GM12878 (cell line): ENCODE measurements at regions of chr1 and their contacts with region 1.

Region 1: GRCh38 chr1:21721295-21721985 is 52.3 kb upstream of the RAP1GAP start:
- DNase-seq: no peak
- ATAC-seq: no peak
- H3K4me3 ChIP-seq: no peak overlapping the region
- H3K27ac ChIP-seq: no peak overlapping the region
- H3K4me1 ChIP-seq: no peaks in the 10 kb centered on the region
- H3K27me3 ChIP-seq: no peaks in the 10 kb centered on the region
- CTCF ChIP-seq: no peak
- EP300 ChIP-seq: no peak
- POLR2A ChIP-seq: no peak
- RAD21 ChIP-seq: no peak

Region 2: GRCh38 chr1:21734526-21734925 is 13.1 kb after region 1 on chr1:
- CTCF ChIA-PET with region 1: interaction called, 3 read pairs
- POLR2A ChIA-PET with region 1: interaction called, 3 read pairs
- RAD21 ChIA-PET with region 1: no interaction called
- SMC1A ChIA-PET with region 1: interaction called, 18 read pairs
- in situ Hi-C with region 1: no loop called
- intact Hi-C with region 1: no loop called
- DNase-seq: no peak
- ATAC-seq: no peak
- H3K4me3 ChIP-seq: no peak overlapping the region
- H3K27ac ChIP-seq: no peak overlapping the region
- H3K4me1 ChIP-seq: no peaks in the 10 kb centered on the region
- H3K27me3 ChIP-seq: no peaks in the 10 kb centered on the region
- CTCF ChIP-seq: no peak
- EP300 ChIP-seq: no peak
- POLR2A ChIP-seq: no peak
- RAD21 ChIP-seq: no peak

Region 3: DNA sequence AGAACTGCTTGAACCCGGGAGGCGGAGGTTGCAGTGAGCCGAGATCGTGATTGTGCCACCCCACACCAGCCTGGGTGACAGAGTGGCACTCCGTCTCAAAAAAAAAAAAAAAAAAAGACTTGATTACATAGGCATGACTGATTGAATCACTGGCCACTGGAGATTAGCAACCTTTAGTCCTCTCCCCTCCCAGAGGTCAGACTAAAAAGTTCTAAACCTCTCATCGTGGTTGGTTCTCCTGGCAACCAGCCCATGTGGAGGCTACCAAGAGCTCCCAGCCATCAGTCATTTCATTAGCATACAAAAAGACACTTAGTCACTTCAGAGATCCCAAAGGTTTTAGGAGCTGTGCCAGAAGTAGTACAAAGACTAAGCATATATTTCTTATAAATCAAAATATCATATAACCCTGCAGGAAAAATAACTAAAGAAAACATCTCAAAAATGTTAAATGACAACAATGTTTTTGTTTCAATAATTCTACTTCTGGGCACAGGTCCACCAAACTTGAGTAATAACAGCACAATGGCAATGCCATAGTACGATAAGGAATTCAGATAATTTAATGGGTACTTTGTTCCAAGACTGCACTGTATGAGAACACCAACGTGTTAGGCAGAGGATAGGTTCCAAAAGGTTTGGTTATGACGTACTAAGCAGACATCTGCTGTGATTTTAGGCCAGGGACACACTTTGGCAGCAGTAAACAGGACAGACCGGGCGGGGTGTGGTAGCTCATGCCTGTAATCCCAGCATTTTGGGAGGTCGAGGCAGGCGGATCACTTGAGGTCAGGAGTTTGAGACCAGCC is 43.4 kb after region 1 on chr1:
- CTCF ChIA-PET with region 1: no interaction called
- POLR2A ChIA-PET with region 1: no interaction called
- RAD21 ChIA-PET with region 1: no interaction called
- SMC1A ChIA-PET with region 1: interaction called, 10 read pairs
- in situ Hi-C with region 1: no loop called
- intact Hi-C with region 1: no loop called
- DNase-seq: no peak
- ATAC-seq: peak; percentile 40
- H3K4me3 ChIP-seq: peak overlapping the region; percentile 23; the same call in 1 of the 2 replicates
- H3K27ac ChIP-seq: peak overlapping the region; percentile 99
- H3K4me1 ChIP-seq: peaks cover 76% of the 10 kb centered on the region
- H3K27me3 ChIP-seq: no peaks in the 10 kb centered on the region
- CTCF ChIP-seq: no peak
- EP300 ChIP-seq: no peak
- POLR2A ChIP-seq: no peak
- RAD21 ChIP-seq: no peak

Region 4: DNA sequence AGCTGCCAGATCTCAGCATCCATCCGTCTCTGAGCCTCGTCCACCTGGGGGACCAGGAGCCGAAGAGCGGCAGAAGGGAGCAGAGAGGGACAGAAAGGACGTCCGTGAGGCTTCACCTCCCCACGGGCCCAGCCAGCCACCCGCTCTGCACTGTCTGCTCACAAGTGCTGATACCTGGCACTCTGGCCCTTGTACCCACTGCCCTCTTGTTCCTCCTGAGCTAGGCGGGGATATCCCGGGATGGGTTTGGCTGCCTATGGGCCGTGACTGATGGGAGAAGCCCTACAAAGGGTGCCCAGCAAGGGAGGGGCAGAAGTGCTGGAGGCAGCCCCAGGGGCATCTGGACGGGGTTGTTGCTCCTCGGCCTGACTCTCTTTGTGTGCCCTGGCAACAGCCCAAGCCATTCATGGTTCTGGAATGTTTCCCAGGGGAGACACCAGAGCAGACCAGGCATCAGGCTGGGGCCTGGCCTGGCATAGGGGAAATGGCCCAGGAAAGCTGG is 148.2 kb after region 1 on chr1:
- CTCF ChIA-PET with region 1: no interaction called
- POLR2A ChIA-PET with region 1: no interaction called
- RAD21 ChIA-PET with region 1: no interaction called
- SMC1A ChIA-PET with region 1: no interaction called
- in situ Hi-C with region 1: no loop called
- intact Hi-C with region 1: no loop called
- DNase-seq: no peak
- ATAC-seq: no peak
- H3K4me3 ChIP-seq: no peak overlapping the region
- H3K27ac ChIP-seq: no peak overlapping the region
- H3K4me1 ChIP-seq: peaks cover 28% of the 10 kb centered on the region
- H3K27me3 ChIP-seq: no peaks in the 10 kb centered on the region; a peak in 1 of 4 replicates
- CTCF ChIP-seq: no peak
- EP300 ChIP-seq: no peak
- POLR2A ChIP-seq: no peak
- RAD21 ChIP-seq: no peak